HepG2 (cell line): ENCODE measurements at regions of chr14 and their contacts with region 1.

Region 1: DNA sequence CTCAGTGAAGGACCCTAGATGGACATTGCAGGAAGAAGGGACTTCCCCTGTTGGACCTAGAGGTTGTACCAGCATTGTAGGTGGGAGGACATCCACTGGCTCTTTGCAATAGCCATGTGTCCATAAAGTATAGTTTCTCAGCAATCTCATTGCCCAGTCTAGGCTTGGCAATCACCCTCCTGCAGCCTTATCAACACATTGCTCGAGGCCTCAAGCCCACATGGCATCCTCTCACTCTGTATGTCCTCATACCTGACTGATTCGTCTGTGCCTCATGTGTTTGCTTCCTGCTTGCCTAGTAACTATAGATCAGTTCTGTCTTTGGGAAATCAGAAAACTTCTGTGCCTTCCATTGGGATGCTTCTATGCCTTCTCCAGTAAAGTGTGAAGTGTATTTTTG is 70.9 kb downstream of the FOXG1 start:
- DNase-seq: no peak
- ATAC-seq: no peak
- H3K4me3 ChIP-seq: no peak overlapping the region
- H3K27ac ChIP-seq: no peak overlapping the region
- H3K4me1 ChIP-seq: no peaks in the 10 kb centered on the region
- H3K27me3 ChIP-seq: no peaks in the 10 kb centered on the region
- CTCF ChIP-seq: no peak
- EP300 ChIP-seq: no peak
- POLR2A ChIP-seq: no peak
- RAD21 ChIP-seq: no peak

Region 2: GRCh38 chr14:27320261-27320660 is 1517.3 kb before region 1 on chr14:
- CTCF ChIA-PET with region 1: no interaction called
- POLR2A ChIA-PET with region 1: no interaction called
- in situ Hi-C with region 1: no loop called
- intact Hi-C with region 1: loop called (anchors 10 kb)
- DNase-seq: no peak
- ATAC-seq: no peak
- H3K4me3 ChIP-seq: no peak overlapping the region
- H3K27ac ChIP-seq: no peak overlapping the region
- H3K4me1 ChIP-seq: no peaks in the 10 kb centered on the region
- H3K27me3 ChIP-seq: no peaks in the 10 kb centered on the region
- CTCF ChIP-seq: no peak
- EP300 ChIP-seq: no peak
- POLR2A ChIP-seq: no peak
- RAD21 ChIP-seq: no peak

Region 3: DNA sequence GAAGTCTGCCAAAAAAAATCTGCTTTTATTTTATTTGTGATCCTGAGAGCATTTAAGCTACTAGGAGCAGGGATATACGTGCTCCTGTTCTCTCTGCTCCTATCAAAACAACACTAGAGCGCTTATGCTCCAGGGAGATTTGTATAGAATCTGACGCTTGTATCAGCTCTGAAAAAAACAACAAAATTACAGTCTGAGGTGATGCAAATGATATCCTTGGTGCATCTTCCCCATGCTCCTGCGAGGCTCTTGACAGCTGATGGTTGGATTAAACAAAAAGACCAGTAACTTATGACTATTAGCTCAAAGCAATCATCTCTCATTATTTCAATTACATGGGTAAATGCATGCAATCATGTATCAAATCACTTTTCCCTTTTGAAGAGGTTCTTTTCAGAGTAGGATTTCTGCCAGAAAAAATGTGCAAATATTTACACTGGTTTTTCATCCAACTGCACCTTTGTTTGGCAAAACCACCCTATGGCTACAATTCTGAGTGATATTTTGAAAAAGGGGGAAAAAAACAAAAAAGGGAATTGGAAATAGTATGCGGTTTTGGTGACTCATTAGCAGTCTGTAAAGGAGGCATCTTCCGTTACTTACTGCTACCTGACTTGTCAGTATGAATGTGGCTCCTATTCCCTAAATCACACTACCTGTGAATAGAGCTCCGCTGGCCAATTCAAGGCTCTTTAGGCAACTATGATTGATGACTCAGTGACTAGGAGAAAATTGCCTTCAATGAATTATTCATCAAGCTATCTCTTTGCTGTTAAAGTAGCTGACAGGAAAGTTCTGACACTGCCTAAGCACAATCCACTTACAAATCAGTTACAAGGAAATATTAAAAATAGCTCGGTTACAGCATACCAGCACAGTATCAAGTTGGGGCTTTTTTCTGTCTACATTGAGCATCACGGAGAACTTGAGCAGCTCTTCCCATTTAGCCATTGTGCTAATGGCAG is 379.0 kb after region 1 on chr14:
- CTCF ChIA-PET with region 1: no interaction called
- POLR2A ChIA-PET with region 1: no interaction called
- in situ Hi-C with region 1: no loop called
- intact Hi-C with region 1: no loop called
- DNase-seq: no peak
- ATAC-seq: peak; percentile 28; the same call in 1 of the 3 replicates
- H3K4me3 ChIP-seq: no peak overlapping the region
- H3K27ac ChIP-seq: no peak overlapping the region
- H3K4me1 ChIP-seq: no peaks in the 10 kb centered on the region
- H3K27me3 ChIP-seq: no peaks in the 10 kb centered on the region
- CTCF ChIP-seq: no peak
- EP300 ChIP-seq: no peak
- POLR2A ChIP-seq: no peak
- RAD21 ChIP-seq: no peak